Naive thymus-derived CD4-positive, alpha-beta T cell (primary cell): ENCODE measurements at regions of chr4 and their contacts with region 1.

Region 1: GRCh38 chr4:7802093-7802726 is 137.5 kb downstream of the AFAP1 start:
- DNase-seq: peak; percentile 42 to 79 (median 68)
- ATAC-seq: peak; percentile 94
- H3K4me3 ChIP-seq: no peak overlapping the region
- H3K4me3 Mint-ChIP-seq: no peak overlapping the region
- H3K27ac ChIP-seq: no peak overlapping the region
- H3K27ac Mint-ChIP-seq: peak overlapping the region in 5 of 9 donors; percentile 2 to 74 (median 45)
- H3K4me1 ChIP-seq: no peaks in the 10 kb centered on the region
- H3K4me1 Mint-ChIP-seq: peaks cover 5 to 22% (median 14%) of the 10 kb centered on the region in 7 donors
- H3K27me3 ChIP-seq: no peaks in the 10 kb centered on the region
- H3K27me3 Mint-ChIP-seq: no peaks in the 10 kb centered on the region

Region 2: DNA sequence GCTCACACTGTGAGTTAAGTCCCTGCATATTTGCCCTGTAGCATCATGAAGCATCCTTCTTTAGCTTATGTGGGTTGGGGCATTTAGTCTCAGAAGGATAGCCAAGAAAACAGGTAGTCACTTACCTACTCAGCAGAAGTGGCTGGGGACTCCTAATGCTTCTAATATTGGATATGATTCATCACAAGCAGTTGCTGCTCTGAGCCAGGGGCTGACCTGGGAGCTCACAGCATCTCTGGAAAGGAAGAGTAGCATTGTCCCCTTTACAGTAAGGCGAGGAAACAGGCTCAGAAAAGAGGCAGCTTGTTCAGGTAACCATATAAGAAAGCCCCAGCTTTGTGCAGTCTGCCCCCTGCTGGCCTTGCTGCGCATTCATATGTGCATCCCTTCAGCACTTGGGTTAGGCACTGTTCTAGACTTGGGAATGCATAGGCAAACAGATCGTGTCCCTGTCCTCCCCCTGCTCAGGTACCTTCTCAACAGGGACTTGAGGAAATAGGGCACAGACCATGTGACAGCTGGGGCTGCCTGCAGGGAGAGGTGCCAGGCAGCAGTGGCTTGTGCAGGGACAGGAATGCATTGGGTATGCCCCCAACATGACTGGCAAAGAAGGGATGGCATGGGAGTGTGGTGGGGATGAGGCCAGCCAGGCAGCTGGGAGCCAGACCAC is 928.3 kb before region 1 on chr4:
- CTCF ChIA-PET with region 1: no interaction called
- POLR2A ChIA-PET with region 1: no interaction called
- intact Hi-C with region 1: no loop called
- DNase-seq: peak; percentile 62 to 80 (median 73)
- ATAC-seq: peak; percentile 81
- H3K4me3 ChIP-seq: no peak overlapping the region
- H3K4me3 Mint-ChIP-seq: no peak overlapping the region
- H3K27ac ChIP-seq: no peak overlapping the region
- H3K27ac Mint-ChIP-seq: peak overlapping the region in 3 of 9 donors; percentile 53 to 59 (median 54)
- H3K4me1 ChIP-seq: no peaks in the 10 kb centered on the region
- H3K4me1 Mint-ChIP-seq: peaks cover 0 to 20% (median 6%) of the 10 kb centered on the region in 7 donors
- H3K27me3 ChIP-seq: no peaks in the 10 kb centered on the region
- H3K27me3 Mint-ChIP-seq: no peaks in the 10 kb centered on the region

Region 3: DNA sequence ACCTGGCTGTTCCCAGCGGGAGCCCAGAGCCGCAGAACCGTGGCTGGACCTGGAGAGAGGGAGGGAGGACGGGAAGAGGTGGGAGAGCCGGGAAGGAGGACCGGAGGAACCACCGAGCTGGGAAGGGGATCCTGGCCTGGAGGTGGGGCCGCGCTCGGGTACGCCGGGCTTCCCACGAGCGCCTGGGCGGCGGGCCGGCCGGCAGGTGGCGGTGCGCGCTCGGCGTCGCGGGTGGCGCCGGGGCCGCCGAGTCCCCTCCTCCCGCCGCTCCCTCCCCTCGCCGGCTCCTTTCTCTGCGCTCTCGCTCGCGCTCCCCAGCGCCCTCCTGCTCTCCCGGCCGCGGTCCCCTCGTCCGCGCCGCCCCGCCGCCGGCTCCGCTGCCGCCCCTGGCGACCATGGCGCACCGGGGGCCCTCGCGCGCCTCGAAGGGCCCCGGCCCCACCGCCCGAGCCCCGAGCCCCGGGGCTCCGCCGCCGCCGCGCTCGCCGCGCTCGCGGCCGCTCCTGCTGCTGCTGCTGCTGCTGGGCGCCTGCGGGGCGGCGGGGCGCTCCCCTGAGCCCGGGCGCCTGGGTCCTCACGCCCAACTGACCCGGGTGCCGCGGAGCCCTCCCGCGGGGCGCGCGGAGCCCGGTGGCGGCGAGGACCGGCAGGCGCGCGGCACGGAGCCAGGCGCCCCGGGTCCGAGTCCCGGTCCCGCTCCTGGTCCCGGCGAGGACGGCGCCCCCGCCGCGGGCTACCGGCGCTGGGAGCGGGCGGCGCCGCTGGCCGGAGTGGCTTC is 609.8 kb before region 1 on chr4 and contains the start of gene SORCS2:
- CTCF ChIA-PET with region 1: interaction called, 3 read pairs
- POLR2A ChIA-PET with region 1: no interaction called
- intact Hi-C with region 1: loop called in 1 of 2 experiments (anchors 2 kb)
- DNase-seq: peak in 7 of 9 donors; percentile 25 to 68 (median 34)
- ATAC-seq: peak; percentile 73
- H3K4me3 ChIP-seq: no peak within 1 kb of the TSS
- H3K4me3 Mint-ChIP-seq: peak within 1 kb of the TSS in 8 of 10 donors; percentile 43 to 76 (median 56)
- H3K27ac ChIP-seq: no peak within 1 kb of the TSS
- H3K27ac Mint-ChIP-seq: no peak within 1 kb of the TSS
- H3K4me1 ChIP-seq: no peaks in the 10 kb centered on the region
- H3K4me1 Mint-ChIP-seq: peaks cover 0 to 7% (median 0%) of the 10 kb centered on the region in 7 donors
- H3K27me3 ChIP-seq: peaks cover 0 to 6% of the 10 kb centered on the region in 2 donors
- H3K27me3 Mint-ChIP-seq: peaks cover 38 to 70% (median 60%) of the 10 kb centered on the region in 5 donors
- total RNA-seq, gene SORCS2: 0.10 TPM in 1 of 5 experiments, not detected in the others

Region 4: GRCh38 chr4:7719354-7720174 is 82.6 kb before region 1 on chr4:
- CTCF ChIA-PET with region 1: interaction called, 4 read pairs
- POLR2A ChIA-PET with region 1: no interaction called
- intact Hi-C with region 1: loop called (anchors 1 kb)
- DNase-seq: peak; percentile 8 to 67 (median 48)
- ATAC-seq: peak; percentile 73
- H3K4me3 ChIP-seq: no peak overlapping the region
- H3K4me3 Mint-ChIP-seq: peak overlapping the region in 3 of 10 donors; percentile 21 to 45 (median 41)
- H3K27ac ChIP-seq: no peak overlapping the region
- H3K27ac Mint-ChIP-seq: peak overlapping the region in 1 of 9 donors; percentile 27
- H3K4me1 ChIP-seq: no peaks in the 10 kb centered on the region
- H3K4me1 Mint-ChIP-seq: peaks cover 0 to 11% (median 6%) of the 10 kb centered on the region in 7 donors
- H3K27me3 ChIP-seq: peaks cover 0 to 3% of the 10 kb centered on the region in 2 donors
- H3K27me3 Mint-ChIP-seq: peaks cover 0 to 33% (median 7%) of the 10 kb centered on the region in 5 donors

Region 5: DNA sequence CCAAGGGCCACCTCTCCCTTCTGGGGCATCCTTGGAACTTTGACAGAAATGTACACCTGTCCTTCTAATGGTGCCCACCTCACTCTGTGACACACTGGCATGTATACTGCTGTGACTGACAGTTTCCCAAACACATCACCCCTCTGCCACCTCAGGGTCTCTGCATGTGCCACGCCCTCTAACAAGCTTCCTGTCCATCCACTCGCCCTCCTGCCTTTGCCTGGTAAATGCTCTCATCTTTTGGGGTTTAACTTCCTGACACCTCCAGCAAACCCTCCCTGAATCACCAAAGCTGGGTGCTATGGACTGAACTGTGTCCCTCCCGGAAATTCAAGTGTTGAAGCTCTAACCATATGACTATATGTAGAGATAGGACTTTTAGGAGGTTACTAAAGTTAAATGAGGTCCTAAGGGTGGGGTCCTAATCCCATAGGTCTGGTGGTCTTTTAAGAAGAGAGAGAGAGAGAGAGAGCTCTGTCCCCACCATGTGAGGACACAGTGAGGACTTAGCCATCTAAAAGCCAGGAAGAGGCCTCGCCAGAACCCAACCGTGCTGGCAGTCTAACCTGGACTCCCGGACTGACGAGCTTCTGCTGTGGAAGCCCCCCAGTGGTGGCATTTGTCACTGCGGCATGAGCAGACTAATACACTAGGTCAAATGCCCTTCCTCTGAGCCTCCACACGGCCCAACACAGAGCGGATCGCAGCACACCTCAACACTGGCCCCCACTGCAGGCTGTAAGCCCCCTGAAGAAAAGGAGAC is 41.8 kb after region 1 on chr4:
- CTCF ChIA-PET with region 1: interaction called, 5 read pairs
- POLR2A ChIA-PET with region 1: no interaction called
- intact Hi-C with region 1: loop called (anchors 1 kb)
- DNase-seq: peak; percentile 12 to 66 (median 42)
- ATAC-seq: peak; percentile 84
- H3K4me3 ChIP-seq: no peak overlapping the region
- H3K4me3 Mint-ChIP-seq: peak overlapping the region in 2 of 10 donors; percentile 1 to 45
- H3K27ac ChIP-seq: no peak overlapping the region
- H3K27ac Mint-ChIP-seq: peak overlapping the region in 4 of 9 donors; percentile 10 to 62 (median 22)
- H3K4me1 ChIP-seq: peaks cover 4 to 6% of the 10 kb centered on the region in 2 donors
- H3K4me1 Mint-ChIP-seq: peaks cover 17 to 46% (median 40%) of the 10 kb centered on the region in 7 donors
- H3K27me3 ChIP-seq: no peaks in the 10 kb centered on the region
- H3K27me3 Mint-ChIP-seq: no peaks in the 10 kb centered on the region

Region 6: GRCh38 chr4:7876201-7876875 is 74.1 kb after region 1 on chr4:
- CTCF ChIA-PET with region 1: interaction called, 22 read pairs
- POLR2A ChIA-PET with region 1: no interaction called
- intact Hi-C with region 1: loop called (anchors 1 to 2 kb)
- DNase-seq: peak in 3 of 9 donors; percentile 11 to 21 (median 15)
- ATAC-seq: peak; percentile 64
- H3K4me3 ChIP-seq: peak overlapping the region; percentile 15
- H3K4me3 Mint-ChIP-seq: peak overlapping the region; percentile 8 to 78 (median 66)
- H3K27ac ChIP-seq: peak overlapping the region; percentile 44
- H3K27ac Mint-ChIP-seq: peak overlapping the region; percentile 56 to 98 (median 80)
- H3K4me1 ChIP-seq: peaks cover 5 to 22% of the 10 kb centered on the region in 2 donors
- H3K4me1 Mint-ChIP-seq: peaks cover 19 to 82% (median 72%) of the 10 kb centered on the region in 7 donors
- H3K27me3 ChIP-seq: no peaks in the 10 kb centered on the region
- H3K27me3 Mint-ChIP-seq: no peaks in the 10 kb centered on the region

Region 7: GRCh38 chr4:7960790-7961655 is 158.8 kb after region 1 on chr4:
- CTCF ChIA-PET with region 1: no interaction called
- POLR2A ChIA-PET with region 1: no interaction called
- intact Hi-C with region 1: loop called in 1 of 2 experiments (anchors 1 kb)
- DNase-seq: peak in 8 of 9 donors; percentile 20 to 81 (median 31)
- ATAC-seq: peak; percentile 62
- H3K4me3 ChIP-seq: no peak overlapping the region
- H3K4me3 Mint-ChIP-seq: peak overlapping the region in 9 of 10 donors; percentile 38 to 74 (median 58)
- H3K27ac ChIP-seq: no peak overlapping the region
- H3K27ac Mint-ChIP-seq: peak overlapping the region; percentile 38 to 87 (median 72)
- H3K4me1 ChIP-seq: peaks cover 22 to 26% of the 10 kb centered on the region in 2 donors
- H3K4me1 Mint-ChIP-seq: peaks cover 16 to 54% (median 33%) of the 10 kb centered on the region in 7 donors
- H3K27me3 ChIP-seq: no peaks in the 10 kb centered on the region
- H3K27me3 Mint-ChIP-seq: peaks cover 0 to 6% (median 0%) of the 10 kb centered on the region in 5 donors